Activated T-helper 2 cell treated with anti-CD3 and anti-CD28 coated beads, Interferon-gamma antibody, Interleukin-2, Interleukin-4, amounts not matched to agents 10 μg/mL and 5 μg/mL and 100 μg/mL, durations not matched to agents 14 hours and 24 hours and 36 hours (primary cell): ENCODE measurements at regions of chr16 and their contacts with region 1.

Region 1: GRCh38 chr16:69565671-69566239 is at the start of gene NFAT5:
- DNase-seq: peak; percentile 90
- H3K4me3 Mint-ChIP-seq: peak within 1 kb of the TSS; percentile 100
- H3K27ac Mint-ChIP-seq: peak within 1 kb of the TSS; percentile 98
- H3K4me1 Mint-ChIP-seq: peaks cover 39% of the 10 kb centered on the region
- H3K27me3 Mint-ChIP-seq: no peaks in the 10 kb centered on the region
- total RNA-seq, gene NFAT5: 49.2 and 54.0 TPM in 2 replicates

Region 2: DNA sequence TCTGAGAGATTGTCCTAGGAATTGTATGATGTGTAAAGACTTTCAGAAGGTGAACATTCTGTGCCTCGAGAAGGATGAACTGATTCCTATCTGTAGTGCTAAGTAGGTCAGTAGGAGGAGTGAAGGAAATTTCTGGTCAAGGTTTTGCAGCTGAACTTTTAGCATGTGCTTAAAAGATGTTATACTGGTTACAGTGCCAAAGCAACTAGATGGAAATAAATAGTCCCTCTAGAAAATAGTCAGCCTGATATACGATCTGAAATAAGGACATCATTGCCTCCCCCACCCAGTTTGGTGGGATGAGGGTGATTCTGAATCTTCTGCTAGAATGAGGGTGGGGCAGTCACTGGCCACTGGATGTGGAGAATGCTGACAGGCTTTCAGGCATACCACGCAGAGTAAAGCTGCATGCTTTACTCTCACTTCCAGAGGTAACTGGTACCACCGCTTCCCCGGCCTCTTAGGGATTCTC is 311.8 kb before region 1 on chr16:
- intact Hi-C with region 1: no loop called
- DNase-seq: no peak
- H3K4me3 Mint-ChIP-seq: no peak overlapping the region
- H3K27ac Mint-ChIP-seq: no peak overlapping the region
- H3K4me1 Mint-ChIP-seq: peaks cover 10% of the 10 kb centered on the region
- H3K27me3 Mint-ChIP-seq: no peaks in the 10 kb centered on the region

Region 3: GRCh38 chr16:69386596-69386995 is 179.2 kb before region 1 on chr16:
- intact Hi-C with region 1: loop called (anchors 2 kb)
- DNase-seq: no peak
- H3K4me3 Mint-ChIP-seq: no peak overlapping the region
- H3K27ac Mint-ChIP-seq: no peak overlapping the region
- H3K4me1 Mint-ChIP-seq: peaks cover 20% of the 10 kb centered on the region
- H3K27me3 Mint-ChIP-seq: no peaks in the 10 kb centered on the region

Region 4: DNA sequence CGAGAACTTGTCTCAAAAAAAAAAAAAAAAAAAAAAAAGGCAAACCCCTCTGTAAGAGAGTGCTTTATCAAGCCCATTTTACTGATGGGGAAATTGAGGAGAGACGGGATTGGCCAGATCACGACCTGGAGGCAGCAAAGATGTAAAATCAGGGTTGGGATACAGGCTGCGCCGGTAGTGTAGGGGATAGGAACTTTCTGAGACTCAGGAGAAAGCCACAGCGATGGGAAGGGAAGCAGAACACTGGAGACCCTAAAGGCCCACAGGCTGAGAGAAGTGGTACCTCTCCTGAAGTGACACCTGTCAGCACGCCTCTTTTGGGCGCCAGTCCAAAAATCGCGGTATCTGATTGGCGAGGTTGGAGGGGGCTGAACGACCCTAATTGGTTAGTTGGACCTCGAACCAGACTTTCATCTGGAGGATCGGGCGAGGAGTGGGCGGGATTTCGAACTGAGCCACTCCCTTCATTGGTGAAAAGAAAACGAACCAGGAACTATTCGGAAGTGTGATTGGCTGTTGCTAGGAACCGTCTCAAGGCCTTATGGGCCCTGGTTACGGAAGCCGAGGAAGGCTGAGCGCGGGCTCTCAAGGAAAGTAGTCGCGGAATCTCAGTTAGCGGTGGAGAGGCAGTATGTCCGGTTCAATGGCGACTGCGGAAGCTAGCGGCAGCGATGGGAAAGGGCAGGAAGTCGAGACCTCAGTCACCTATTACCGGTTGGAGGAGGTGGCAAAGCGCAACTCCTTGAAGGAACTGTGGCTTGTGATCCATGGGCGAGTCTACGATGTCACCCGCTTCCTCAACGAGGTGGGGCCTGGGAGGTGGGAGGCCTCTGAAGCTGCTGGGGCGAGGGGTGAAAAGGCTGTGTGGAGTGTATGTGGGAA is 141.5 kb before region 1 on chr16 and contains the start of gene CYB5B:
- intact Hi-C with region 1: loop called (anchors 1 kb)
- DNase-seq: peak; percentile 95
- H3K4me3 Mint-ChIP-seq: peak within 1 kb of the TSS; percentile 96
- H3K27ac Mint-ChIP-seq: peak within 1 kb of the TSS; percentile 89
- H3K4me1 Mint-ChIP-seq: peaks cover 23% of the 10 kb centered on the region
- H3K27me3 Mint-ChIP-seq: no peaks in the 10 kb centered on the region
- total RNA-seq, gene CYB5B: 201 and 204 TPM in 2 replicates

Region 5: DNA sequence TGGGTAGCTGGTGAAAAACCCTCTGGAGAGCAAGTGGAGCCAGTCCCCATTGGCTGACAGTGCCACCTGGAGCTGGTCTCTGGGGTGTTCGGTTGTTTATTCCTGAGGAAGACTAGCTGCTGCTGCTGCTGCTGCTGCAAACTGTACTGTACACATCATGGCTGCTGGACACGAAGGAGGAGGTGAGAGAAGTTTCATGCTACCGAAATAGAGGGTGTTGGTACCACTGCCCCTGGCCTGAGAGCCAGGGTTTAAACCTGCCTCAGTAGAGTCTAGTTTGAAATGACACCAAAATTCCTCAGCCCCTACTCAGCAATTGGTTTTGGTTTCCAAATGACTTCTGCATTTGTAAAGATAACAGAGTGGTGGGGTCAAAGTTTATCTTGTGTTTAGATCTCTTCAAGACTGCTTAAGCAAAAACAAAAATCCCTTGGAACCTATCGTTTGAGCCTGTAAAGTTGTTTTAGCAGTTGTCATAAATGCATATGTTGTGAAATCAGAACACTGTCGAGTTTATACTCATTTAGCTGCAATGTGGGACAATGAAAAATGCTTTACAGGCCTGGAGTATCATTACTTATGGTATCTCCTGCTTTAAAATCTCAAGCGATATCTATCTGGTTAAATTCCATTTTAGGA is 100.6 kb before region 1 on chr16:
- intact Hi-C with region 1: loop called (anchors 1 kb)
- DNase-seq: peak; percentile 27
- H3K4me3 Mint-ChIP-seq: peak overlapping the region; percentile 59
- H3K27ac Mint-ChIP-seq: peak overlapping the region; percentile 93
- H3K4me1 Mint-ChIP-seq: peaks cover 64% of the 10 kb centered on the region
- H3K27me3 Mint-ChIP-seq: no peaks in the 10 kb centered on the region

Region 6: GRCh38 chr16:69520800-69521602 is 44.8 kb before region 1 on chr16:
- intact Hi-C with region 1: loop called (anchors 2 kb)
- DNase-seq: no peak
- H3K4me3 Mint-ChIP-seq: no peak overlapping the region
- H3K27ac Mint-ChIP-seq: peak overlapping the region; percentile 75
- H3K4me1 Mint-ChIP-seq: peaks cover 26% of the 10 kb centered on the region
- H3K27me3 Mint-ChIP-seq: no peaks in the 10 kb centered on the region

Region 7: GRCh38 chr16:69754469-69755310 is 188.9 kb after region 1 on chr16 and contains the start of gene NOB1:
- intact Hi-C with region 1: loop called (anchors 5 kb)
- DNase-seq: peak; percentile 97
- H3K4me3 Mint-ChIP-seq: peak within 1 kb of the TSS; percentile 98
- H3K27ac Mint-ChIP-seq: peak within 1 kb of the TSS; percentile 96
- H3K4me1 Mint-ChIP-seq: peaks cover 22% of the 10 kb centered on the region
- H3K27me3 Mint-ChIP-seq: no peaks in the 10 kb centered on the region
- total RNA-seq, gene NOB1: 106 and 109 TPM in 2 replicates